ENCODE measurements at regions of chr16 and their contacts with region 1.

Region 1: DNA sequence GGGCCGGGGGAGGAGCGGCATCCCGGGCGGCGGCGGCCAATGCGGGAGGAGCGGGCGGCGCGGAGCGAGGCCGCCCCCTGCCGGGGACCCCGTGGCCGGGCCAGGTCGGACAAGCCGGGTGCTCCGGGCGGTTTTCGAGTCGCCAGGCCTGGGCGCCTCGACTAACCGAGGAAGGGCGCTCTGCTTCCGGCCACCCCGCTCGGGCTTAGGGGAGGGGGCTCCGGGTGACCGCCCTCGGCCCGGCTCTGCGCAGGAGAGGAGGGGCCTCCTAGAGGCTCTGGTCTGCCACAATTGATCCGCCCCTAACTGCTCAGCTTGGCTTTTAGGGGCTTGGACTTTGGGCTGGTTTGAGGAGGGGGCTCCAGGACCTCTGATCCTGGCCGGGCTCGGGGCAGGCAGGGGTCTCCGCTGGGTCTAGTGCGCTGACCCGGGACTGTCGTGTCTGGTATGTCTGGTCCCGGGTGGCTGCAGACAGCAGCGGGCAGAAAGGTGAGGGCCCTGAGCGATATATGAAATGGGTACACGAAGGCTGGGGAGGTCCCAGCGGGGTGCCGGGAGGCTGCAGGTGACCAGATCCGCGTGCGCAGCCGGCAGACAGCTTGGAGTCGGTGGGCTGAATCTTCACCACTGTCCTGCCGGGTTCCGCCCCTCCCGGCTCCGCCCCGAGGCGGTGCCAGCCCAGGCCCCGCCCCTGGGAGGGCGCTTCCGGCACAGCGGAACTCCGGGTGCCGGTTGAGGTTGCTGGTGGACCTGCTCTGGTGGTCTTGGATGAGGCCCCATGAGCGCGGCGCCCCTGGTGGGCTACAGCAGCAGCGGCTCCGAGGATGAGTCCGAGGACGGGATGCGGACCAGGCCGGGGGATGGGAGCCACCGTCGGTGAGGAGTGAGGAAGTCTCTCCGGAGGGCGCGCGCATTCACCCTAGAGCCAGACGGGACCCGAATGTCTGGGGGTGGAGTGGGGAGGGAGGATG is at the start of gene USB1:
- DNase-seq: peak; percentile 98
- ATAC-seq: peak; percentile 57
- H3K4me3 Mint-ChIP-seq: peak within 1 kb of the TSS; percentile 95
- H3K27ac Mint-ChIP-seq: peak within 1 kb of the TSS; percentile 92
- H3K4me1 Mint-ChIP-seq: peaks cover 42% of the 10 kb centered on the region
- H3K27me3 Mint-ChIP-seq: no peaks in the 10 kb centered on the region
- total RNA-seq, gene USB1: 47.4 to 53.9 TPM

Region 2: GRCh38 chr16:57906382-57907316 is 94.3 kb before region 1 on chr16:
- POLR2A ChIA-PET with region 1: interaction called, 11 read pairs
- DNase-seq: peak; percentile 59
- ATAC-seq: peak; percentile 67
- H3K4me3 Mint-ChIP-seq: no peak overlapping the region
- H3K27ac Mint-ChIP-seq: no peak overlapping the region
- H3K4me1 Mint-ChIP-seq: peaks cover 4% of the 10 kb centered on the region
- H3K27me3 Mint-ChIP-seq: peaks cover 8% of the 10 kb centered on the region

Region 3: GRCh38 chr16:58176608-58177352 is 175.8 kb after region 1 on chr16:
- POLR2A ChIA-PET with region 1: no interaction called
- DNase-seq: no peak
- ATAC-seq: peak; percentile 86
- H3K4me3 Mint-ChIP-seq: peak overlapping the region; percentile 59
- H3K27ac Mint-ChIP-seq: peak overlapping the region; percentile 86
- H3K4me1 Mint-ChIP-seq: peaks cover 23% of the 10 kb centered on the region
- H3K27me3 Mint-ChIP-seq: no peaks in the 10 kb centered on the region